ENCODE measurements at regions of chr2 and their contacts with region 1.

Region 1: DNA sequence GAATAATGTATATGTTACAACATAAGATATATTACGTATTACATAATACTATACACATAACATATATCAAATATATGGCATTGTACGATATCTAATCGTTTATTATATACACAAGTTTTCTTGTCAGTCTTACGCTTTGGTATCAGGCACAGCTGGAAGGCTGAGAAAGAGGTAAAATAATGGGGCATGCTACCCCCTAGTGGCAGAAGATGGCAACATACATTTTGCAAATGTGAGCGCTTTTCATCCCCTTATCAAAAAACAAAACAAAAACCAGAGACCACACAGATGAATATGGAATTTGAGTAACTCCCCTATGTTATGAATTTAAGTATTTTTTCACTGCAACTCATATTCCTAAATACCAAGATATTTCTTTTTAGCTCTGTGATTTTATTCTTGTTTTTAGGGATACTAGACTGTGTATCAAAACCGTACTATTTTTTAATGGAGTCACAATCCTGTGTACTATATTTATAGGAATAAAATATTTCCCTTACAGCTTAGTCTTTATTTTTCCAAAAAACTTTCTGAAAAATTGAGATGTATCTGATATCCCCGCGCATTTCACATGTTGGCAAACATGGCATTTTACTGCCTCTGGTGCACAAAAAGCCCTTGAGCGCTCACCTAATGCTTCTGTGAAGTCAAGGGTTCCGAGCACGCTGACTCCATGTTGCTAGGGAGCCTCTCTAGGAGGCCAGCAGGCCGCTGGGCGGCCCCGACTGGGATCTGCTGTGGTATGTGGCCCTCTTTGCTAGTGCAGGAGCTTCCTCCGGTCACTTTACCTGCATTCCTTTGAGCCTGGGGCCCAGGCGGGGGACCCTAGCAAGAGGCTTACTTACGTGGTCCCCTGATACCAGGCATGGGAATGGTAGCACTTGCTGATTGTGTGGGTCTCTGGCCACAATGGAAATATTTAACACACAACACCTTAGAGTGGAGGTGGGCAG is 62.5 kb downstream of the SLC4A3 start:
- DNase-seq: peak; percentile 25 to 39 (median 29)
- H3K4me3 ChIP-seq: no peak overlapping the region
- H3K4me3 Mint-ChIP-seq: no peak overlapping the region
- H3K27ac ChIP-seq: no peak overlapping the region
- H3K27ac Mint-ChIP-seq: no peak overlapping the region
- H3K4me1 ChIP-seq: no peaks in the 10 kb centered on the region
- H3K4me1 Mint-ChIP-seq: peaks cover 0 to 7% (median 1%) of the 10 kb centered on the region in 4 donors
- H3K27me3 ChIP-seq: no peaks in the 10 kb centered on the region
- H3K27me3 Mint-ChIP-seq: peaks cover 18 to 37% of the 10 kb centered on the region in 2 donors

Region 2: GRCh38 chr2:219701847-219702634 is 12.1 kb after region 1 on chr2:
- CTCF ChIA-PET with region 1: interaction called, 10 read pairs
- POLR2A ChIA-PET with region 1: no interaction called
- intact Hi-C with region 1: no loop called
- DNase-seq: no peak
- H3K4me3 ChIP-seq: no peak overlapping the region
- H3K4me3 Mint-ChIP-seq: no peak overlapping the region
- H3K27ac ChIP-seq: no peak overlapping the region
- H3K27ac Mint-ChIP-seq: no peak overlapping the region
- H3K4me1 ChIP-seq: no peaks in the 10 kb centered on the region
- H3K4me1 Mint-ChIP-seq: no peaks in the 10 kb centered on the region
- H3K27me3 ChIP-seq: peaks cover 11% of the 10 kb centered on the region
- H3K27me3 Mint-ChIP-seq: peaks cover 8 to 42% of the 10 kb centered on the region in 2 donors

Region 3: GRCh38 chr2:219769090-219769910 is 79.3 kb after region 1 on chr2:
- CTCF ChIA-PET with region 1: no interaction called
- POLR2A ChIA-PET with region 1: no interaction called
- intact Hi-C with region 1: no loop called
- DNase-seq: no peak
- H3K4me3 ChIP-seq: no peak overlapping the region
- H3K4me3 Mint-ChIP-seq: no peak overlapping the region
- H3K27ac ChIP-seq: no peak overlapping the region
- H3K27ac Mint-ChIP-seq: no peak overlapping the region
- H3K4me1 ChIP-seq: no peaks in the 10 kb centered on the region
- H3K4me1 Mint-ChIP-seq: no peaks in the 10 kb centered on the region
- H3K27me3 ChIP-seq: no peaks in the 10 kb centered on the region
- H3K27me3 Mint-ChIP-seq: peaks cover 1 to 2% of the 10 kb centered on the region in 2 donors